PC-9 (cell line): ENCODE measurements at regions of chr11 and their contacts with region 1.

Region 1: GRCh38 chr11:47248664-47249377 is at the start of gene ACP2:
- DNase-seq: peak; percentile 77 to 88
- H3K4me3 ChIP-seq: peak within 1 kb of the TSS; percentile 74
- H3K27ac ChIP-seq: peak within 1 kb of the TSS; percentile 33
- H3K4me1 ChIP-seq: peaks cover 33% of the 10 kb centered on the region
- H3K27me3 ChIP-seq: no peaks in the 10 kb centered on the region
- CTCF ChIP-seq: no peak; the same call in 1 of the 2 replicates
- total RNA-seq, gene ACP2: 20.4 and 24.1 TPM in 2 replicates

Region 2: DNA sequence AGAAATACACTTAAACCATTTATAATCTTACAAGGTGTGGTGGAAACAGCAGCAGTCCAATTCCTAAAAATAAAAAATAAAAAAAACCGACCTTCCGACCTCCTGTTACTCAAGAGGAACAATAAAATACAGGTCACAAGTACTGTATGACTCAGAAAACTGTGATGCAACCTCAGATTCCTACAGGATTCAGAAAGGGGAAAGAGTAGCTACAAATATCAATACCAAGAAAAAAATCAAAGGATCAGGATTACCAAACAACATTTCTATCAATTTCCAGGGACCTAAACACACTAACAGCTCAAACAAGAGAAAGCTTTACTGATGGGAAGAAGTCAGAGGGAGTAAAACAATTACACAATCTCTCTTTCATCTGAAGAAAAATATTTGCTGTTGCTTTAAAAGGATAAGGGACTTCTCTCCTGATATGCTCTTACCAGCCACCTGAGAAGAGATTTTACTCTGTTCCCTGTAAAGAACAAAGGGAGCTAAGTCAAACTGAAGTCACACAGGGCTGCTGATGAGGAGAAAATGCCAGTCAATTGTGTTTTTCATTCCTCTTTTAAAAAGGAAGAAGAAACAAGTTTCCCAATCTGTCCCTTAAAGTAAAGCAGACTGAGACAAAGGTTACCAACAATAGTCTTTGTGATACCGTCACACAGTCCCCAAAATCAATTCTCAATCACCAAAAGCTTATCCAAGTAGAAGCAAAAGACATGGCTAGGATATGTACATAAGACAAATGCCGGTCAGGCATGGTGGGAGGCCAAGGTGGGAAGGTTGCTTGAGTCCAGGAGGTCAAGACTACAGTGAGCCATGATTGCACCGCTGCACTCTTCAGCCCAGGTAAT is 694.4 kb before region 1 on chr11:
- CTCF ChIA-PET with region 1: no interaction called
- POLR2A ChIA-PET with region 1: interaction called, 10 read pairs
- intact Hi-C with region 1: no loop called
- DNase-seq: peak; percentile 17 to 97
- H3K4me3 ChIP-seq: peak overlapping the region; percentile 43; the same call in 1 of the 2 replicates
- H3K27ac ChIP-seq: peak overlapping the region; percentile 95
- H3K4me1 ChIP-seq: peaks cover 65% of the 10 kb centered on the region
- H3K27me3 ChIP-seq: no peaks in the 10 kb centered on the region
- CTCF ChIP-seq: no peak

Region 3: GRCh38 chr11:47056261-47056915 is 192.4 kb before region 1 on chr11:
- CTCF ChIA-PET with region 1: no interaction called
- POLR2A ChIA-PET with region 1: no interaction called
- intact Hi-C with region 1: no loop called
- DNase-seq: peak in 1 of 2 experiments; percentile 23
- H3K4me3 ChIP-seq: no peak overlapping the region
- H3K27ac ChIP-seq: no peak overlapping the region
- H3K4me1 ChIP-seq: no peaks in the 10 kb centered on the region
- H3K27me3 ChIP-seq: no peaks in the 10 kb centered on the region
- CTCF ChIP-seq: no peak

Region 4: DNA sequence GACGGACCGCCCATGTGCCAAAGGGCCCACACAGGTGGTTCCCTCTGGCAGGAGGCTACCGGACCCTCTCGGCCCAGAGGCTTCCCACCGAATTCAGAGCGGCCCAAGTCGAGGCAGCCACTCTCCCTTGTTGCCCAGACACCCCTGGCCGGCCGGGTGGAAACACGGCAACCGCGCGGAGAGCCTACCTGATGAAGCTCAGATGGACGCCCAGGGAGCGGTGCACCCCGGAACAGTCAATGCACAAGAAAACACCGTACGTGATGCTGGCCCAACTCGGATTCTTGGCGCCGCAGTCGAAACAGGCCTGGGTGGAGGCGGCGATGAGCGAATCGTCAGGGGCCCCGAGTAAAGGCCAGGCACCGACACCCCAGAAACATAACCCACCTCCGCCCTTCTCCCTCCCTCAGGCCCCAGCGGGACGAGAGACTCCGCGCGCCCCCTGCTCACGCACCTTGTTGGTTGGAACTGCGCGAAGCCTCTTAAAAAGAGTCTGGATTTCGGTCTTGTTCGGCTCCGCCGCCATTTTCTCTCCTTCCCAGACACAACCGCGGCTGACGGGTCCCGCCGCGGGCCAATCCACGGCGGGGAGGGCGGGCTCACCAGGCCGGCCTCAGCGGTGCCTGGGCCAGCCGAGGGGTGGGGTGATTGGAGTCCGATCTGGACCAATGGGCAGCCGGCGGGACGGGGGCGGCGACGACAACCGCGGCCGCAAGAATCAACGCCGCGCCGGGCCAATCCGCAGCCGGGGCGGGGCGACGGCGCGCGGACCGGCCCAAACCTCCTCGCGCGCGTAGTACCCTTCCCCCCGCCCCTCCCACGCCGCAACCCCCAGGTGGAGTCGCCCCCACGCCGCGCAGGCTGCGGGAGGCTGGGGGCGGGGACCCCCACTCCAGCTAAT is 72.2 kb before region 1 on chr11 and contains the start of gene ARFGAP2:
- CTCF ChIA-PET with region 1: interaction called, 5 read pairs
- POLR2A ChIA-PET with region 1: interaction called, 3 read pairs
- intact Hi-C with region 1: loop called (anchors 2 kb)
- DNase-seq: peak; percentile 85 to 97
- H3K4me3 ChIP-seq: peak within 1 kb of the TSS; percentile 95
- H3K27ac ChIP-seq: peak within 1 kb of the TSS; percentile 77
- H3K4me1 ChIP-seq: peaks cover 12% of the 10 kb centered on the region
- H3K27me3 ChIP-seq: no peaks in the 10 kb centered on the region
- CTCF ChIP-seq: no peak
- total RNA-seq, gene ARFGAP2: 122 and 130 TPM in 2 replicates

Region 5: DNA sequence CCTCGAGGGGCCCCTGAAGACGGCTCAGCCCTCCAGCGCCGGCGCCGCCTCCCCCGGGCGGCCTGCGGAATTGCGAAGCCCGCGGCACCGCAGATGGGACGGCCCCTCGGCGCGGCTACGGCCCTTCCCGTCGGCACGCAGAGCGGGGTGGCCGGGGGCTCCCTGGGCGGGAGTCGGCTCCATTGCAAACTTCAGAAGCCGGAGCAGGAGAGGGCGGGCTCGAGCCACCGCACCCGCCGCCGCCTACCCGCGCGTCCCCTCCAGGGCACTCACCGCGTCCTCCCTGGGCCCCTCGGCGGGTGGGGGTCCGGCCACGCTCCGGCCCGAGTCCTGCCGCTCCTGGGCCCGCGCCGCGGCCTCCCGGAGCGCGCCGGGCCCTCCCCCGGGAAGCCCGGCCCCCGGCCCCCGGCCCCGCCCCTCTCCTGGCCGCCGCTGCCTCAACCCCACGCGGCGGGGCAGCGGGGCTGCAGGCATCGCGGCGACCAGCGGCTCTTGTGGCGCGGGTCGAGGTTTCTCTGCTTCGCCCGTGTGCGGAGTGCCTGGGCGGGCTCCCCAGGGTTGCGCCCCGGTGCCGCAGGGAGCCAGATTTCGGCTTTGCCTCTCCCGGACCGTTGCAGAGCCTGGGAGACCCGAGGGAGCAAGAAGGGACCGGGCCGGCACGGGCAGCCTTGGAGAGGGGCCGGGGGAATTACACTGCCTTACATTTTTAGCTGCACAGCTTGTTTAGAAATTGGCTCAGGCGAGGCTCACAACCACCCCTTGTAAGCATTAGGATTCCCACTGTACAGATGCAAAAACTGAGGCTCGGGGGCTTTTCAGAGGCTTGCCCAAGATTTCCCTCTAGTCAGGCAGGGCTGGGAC is 62.5 kb before region 1 on chr11 and contains the start of gene PACSIN3:
- CTCF ChIA-PET with region 1: interaction called, 3 read pairs
- POLR2A ChIA-PET with region 1: interaction called, 3 read pairs
- intact Hi-C with region 1: loop called (anchors 1 kb)
- DNase-seq: peak in 1 of 2 experiments; percentile 64
- H3K4me3 ChIP-seq: peak within 1 kb of the TSS; percentile 77
- H3K27ac ChIP-seq: peak within 1 kb of the TSS; percentile 84
- H3K4me1 ChIP-seq: peaks cover 56% of the 10 kb centered on the region
- H3K27me3 ChIP-seq: no peaks in the 10 kb centered on the region
- CTCF ChIP-seq: no peak
- total RNA-seq, gene PACSIN3: 113 and 114 TPM in 2 replicates

Region 6: DNA sequence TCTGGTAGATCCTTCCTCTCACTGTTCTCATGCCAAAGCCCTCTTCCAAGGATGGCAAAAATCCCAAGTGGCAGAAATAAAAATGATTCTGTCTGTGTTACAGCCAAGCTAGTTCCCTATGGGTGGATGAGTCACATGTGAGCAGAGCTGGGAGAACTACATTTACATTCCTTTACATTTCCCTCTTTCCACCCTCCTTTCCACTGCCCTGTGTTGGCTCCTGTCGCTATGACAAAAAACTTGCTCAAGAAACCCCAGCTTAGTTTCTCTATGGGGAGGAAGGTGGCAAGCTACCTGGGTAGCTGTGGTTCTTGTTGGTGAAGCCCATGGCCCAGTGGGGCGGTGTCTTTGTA is 44.2 kb before region 1 on chr11:
- CTCF ChIA-PET with region 1: no interaction called
- POLR2A ChIA-PET with region 1: interaction called, 11 read pairs
- intact Hi-C with region 1: no loop called
- DNase-seq: peak; percentile 61 to 89
- H3K4me3 ChIP-seq: no peak overlapping the region
- H3K27ac ChIP-seq: peak overlapping the region; percentile 70
- H3K4me1 ChIP-seq: peaks cover 20% of the 10 kb centered on the region
- H3K27me3 ChIP-seq: no peaks in the 10 kb centered on the region
- CTCF ChIP-seq: no peak

Region 7: GRCh38 chr11:47268448-47269001 is 19.7 kb after region 1 on chr11:
- CTCF ChIA-PET with region 1: no interaction called
- POLR2A ChIA-PET with region 1: no interaction called
- intact Hi-C with region 1: no loop called
- DNase-seq: no peak
- H3K4me3 ChIP-seq: peak overlapping the region; percentile 72; the same call in 1 of the 2 replicates
- H3K27ac ChIP-seq: peak overlapping the region; percentile 69
- H3K4me1 ChIP-seq: peaks cover 54% of the 10 kb centered on the region
- H3K27me3 ChIP-seq: no peaks in the 10 kb centered on the region
- CTCF ChIP-seq: no peak